ENCODE measurements at regions of chr21 and their contacts with region 1.

Region 1: DNA sequence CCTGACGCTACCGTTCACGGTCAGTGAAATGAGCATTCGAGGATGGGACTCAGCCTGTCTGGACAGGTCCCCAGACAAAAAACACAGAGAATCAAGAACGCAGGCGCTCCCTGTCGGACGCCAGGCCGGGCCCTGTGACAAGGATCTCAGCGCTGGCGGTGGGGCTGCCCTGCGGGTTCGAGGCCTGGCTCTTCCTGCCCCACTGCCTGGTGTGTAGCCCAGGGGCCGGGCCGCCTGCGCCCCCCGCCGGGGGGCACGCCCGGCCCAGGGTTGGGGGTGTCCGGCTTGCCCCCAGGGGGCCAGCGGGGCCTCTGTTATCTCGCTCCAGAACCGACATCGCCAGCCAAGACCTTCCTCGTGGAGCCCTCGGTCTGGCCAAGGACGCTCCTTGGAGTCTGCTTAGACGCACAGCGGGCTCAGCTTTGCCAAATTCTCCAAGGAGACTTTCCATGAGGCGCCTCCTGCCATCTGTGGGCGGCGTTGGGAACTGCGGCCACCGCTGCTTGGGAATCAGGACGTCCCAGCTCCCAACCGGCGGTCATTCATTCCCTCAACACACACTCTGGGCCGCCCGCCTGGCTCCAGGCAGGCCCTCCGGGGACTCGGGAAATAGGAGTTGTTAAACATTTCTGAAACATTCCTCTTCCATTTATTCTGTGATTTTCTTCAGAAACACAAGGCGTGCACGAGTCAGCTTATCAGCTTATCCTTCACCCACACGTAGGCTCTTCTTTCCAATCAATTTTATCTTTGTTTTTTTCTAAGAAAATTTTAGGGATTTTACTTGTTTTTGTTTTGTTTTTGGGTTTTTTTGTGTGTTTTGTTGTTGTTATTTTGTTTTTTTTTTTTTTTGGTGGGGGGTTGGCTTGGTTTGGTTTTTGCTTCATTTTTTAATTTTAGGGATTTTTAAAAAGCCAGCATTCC is 11.4 kb upstream of the RIPK4 start:
- DNase-seq: peak; percentile 91
- ATAC-seq: peak; percentile 96
- H3K4me3 ChIP-seq: no peak overlapping the region
- H3K27ac ChIP-seq: no peak overlapping the region
- H3K4me1 ChIP-seq: no peaks in the 10 kb centered on the region
- H3K27me3 ChIP-seq: peaks cover 36% of the 10 kb centered on the region
- CTCF ChIP-seq: peak; percentile 92

Region 2: GRCh38 chr21:41612674-41613532 is 165.3 kb before region 1 on chr21:
- intact Hi-C with region 1: loop called (anchors 5 kb)
- DNase-seq: peak; percentile 81
- ATAC-seq: peak; percentile 84
- H3K4me3 ChIP-seq: no peak overlapping the region
- H3K27ac ChIP-seq: peak overlapping the region; percentile 64
- H3K4me1 ChIP-seq: peaks cover 27% of the 10 kb centered on the region
- H3K27me3 ChIP-seq: no peaks in the 10 kb centered on the region
- CTCF ChIP-seq: peak; percentile 67

Region 3: DNA sequence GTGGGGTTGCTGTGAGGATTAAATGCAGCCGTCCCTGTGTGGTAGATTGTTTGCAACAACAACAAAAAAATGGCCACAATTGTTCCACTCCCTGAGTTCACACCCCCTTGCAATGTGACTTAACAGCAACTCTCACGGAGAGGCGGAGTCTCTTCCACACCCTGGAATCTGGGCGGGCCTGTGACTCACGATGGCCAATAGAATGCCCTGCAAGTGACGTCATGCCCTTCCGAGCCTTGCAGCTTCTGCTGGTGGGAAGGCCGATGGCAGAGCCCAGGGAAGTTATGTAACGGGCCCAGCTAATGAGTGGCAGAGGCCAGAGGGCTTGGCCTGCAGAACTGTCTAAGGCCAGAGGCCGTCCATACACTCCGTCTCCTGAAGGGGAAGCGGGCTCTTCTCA is 99.3 kb before region 1 on chr21:
- intact Hi-C with region 1: no loop called
- DNase-seq: peak; percentile 95
- ATAC-seq: peak; percentile 95
- H3K4me3 ChIP-seq: peak overlapping the region; percentile 19
- H3K27ac ChIP-seq: peak overlapping the region; percentile 91
- H3K4me1 ChIP-seq: peaks cover 13% of the 10 kb centered on the region
- H3K27me3 ChIP-seq: no peaks in the 10 kb centered on the region
- CTCF ChIP-seq: no peak